Right ventricle myocardium inferior (tissue), 1 donor: ENCODE measurements at regions of chr1 and their contacts with region 1.

Region 1: GRCh38 chr1:32964461-32965250 is at the start of gene RNF19B:
- DNase-seq: peak; percentile 97
- ATAC-seq: peak; percentile 99
- total RNA-seq, gene RNF19B: 15.5 TPM

Region 2: GRCh38 chr1:33036526-33037503 is 72.2 kb after region 1 on chr1 and contains the start of gene AK2:
- intact Hi-C with region 1: loop called (anchors 5 kb)
- DNase-seq: peak; percentile 98
- ATAC-seq: peak; percentile 100
- total RNA-seq, gene AK2: 129 TPM

Region 3: GRCh38 chr1:33055210-33056008 is 90.8 kb after region 1 on chr1:
- intact Hi-C with region 1: loop called (anchors 1 kb)
- DNase-seq: peak; percentile 86
- ATAC-seq: peak; percentile 97

Region 4: DNA sequence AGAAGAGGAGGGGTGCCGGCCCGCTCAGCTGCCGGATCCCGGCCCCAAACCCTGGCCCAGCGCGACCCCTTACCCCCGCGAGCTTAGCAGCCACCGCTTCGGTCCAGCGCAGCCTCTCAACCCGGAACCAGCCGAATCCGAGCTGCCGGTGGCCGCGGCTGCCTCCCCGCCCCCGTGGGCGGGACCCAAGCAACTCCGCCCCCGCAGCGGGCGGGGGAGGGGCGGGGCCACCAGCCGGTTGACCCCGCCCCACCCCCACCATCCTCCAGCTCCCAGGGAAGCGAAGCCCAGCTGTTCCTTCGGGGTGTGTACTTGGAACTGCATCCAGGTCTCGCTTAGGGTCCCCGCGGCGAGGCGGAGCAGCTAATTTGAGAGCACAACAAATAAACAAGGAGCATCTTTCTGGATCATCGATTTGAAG is 217.3 kb after region 1 on chr1 and contains the start of gene TRIM62:
- intact Hi-C with region 1: no loop called
- DNase-seq: peak; percentile 94
- ATAC-seq: peak; percentile 91
- total RNA-seq, gene TRIM62: 2.3 TPM